HepG2 (cell line): ENCODE measurements at regions of chr7 and their contacts with region 1.

Region 1: GRCh38 chr7:101542527-101543241 is 86.4 kb downstream of the MYL10 start:
- DNase-seq: peak; percentile 53
- ATAC-seq: peak; percentile 57
- H3K4me3 ChIP-seq: no peak overlapping the region
- H3K27ac ChIP-seq: no peak overlapping the region
- H3K4me1 ChIP-seq: peaks cover 18% of the 10 kb centered on the region
- H3K27me3 ChIP-seq: no peaks in the 10 kb centered on the region
- CTCF ChIP-seq: peak; percentile 95
- EP300 ChIP-seq: no peak
- POLR2A ChIP-seq: no peak
- RAD21 ChIP-seq: peak; percentile 85

Region 2: GRCh38 chr7:101031082-101031481 is 511.6 kb before region 1 on chr7:
- CTCF ChIA-PET with region 1: no interaction called
- POLR2A ChIA-PET with region 1: no interaction called
- in situ Hi-C with region 1: no loop called
- intact Hi-C with region 1: no loop called
- DNase-seq: no peak
- ATAC-seq: no peak; the same call in 2 of the 3 replicates
- H3K4me3 ChIP-seq: no peak overlapping the region
- H3K27ac ChIP-seq: no peak overlapping the region
- H3K4me1 ChIP-seq: no peaks in the 10 kb centered on the region
- H3K27me3 ChIP-seq: peaks cover 0 to 7% of the 10 kb centered on the region in 2 experiments; a peak in 1 of 5 replicates
- CTCF ChIP-seq: peak; percentile 56
- EP300 ChIP-seq: no peak
- POLR2A ChIP-seq: no peak
- RAD21 ChIP-seq: no peak

Region 3: DNA sequence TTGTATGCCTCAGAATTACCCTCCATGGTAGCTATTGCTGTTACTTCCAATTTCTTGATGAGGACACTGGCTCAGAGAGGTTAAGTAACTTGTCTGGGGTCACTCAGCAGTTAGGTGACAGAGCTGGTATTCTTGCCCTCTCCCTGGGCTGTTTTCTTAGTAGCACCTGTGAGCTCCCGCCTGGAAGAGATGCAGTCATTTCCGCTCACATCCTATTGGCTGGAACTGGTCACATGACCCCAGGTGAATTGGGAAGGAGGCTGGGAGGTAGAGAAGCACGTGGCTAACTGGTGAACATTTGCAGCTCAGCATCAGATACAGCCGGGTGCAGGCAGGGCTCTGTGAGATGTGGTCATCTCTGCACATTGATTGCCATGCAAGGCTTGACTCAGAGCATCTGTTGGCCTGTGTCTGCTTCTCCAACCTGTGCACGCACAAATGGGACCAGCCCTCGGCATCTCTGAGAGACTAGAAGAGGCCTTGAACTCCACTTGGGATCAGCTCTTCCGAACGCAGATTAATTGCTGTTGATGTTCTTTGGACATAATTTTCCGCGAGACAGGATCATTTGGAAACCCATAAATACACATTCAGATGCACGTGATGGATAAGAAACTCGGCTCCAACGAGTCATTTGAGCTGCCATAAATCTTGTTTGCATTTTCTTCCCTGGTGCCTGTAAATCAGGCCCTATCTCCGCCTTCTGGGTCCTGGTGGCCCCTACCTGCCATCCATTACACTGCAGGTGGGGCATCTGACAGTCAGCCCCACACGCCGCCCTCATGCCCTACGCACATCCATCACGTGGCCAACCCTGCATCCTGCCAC is 43.6 kb after region 1 on chr7:
- CTCF ChIA-PET with region 1: no interaction called
- POLR2A ChIA-PET with region 1: no interaction called
- in situ Hi-C with region 1: no loop called
- intact Hi-C with region 1: loop called (anchors 2 kb)
- DNase-seq: no peak
- ATAC-seq: no peak
- H3K4me3 ChIP-seq: no peak overlapping the region
- H3K27ac ChIP-seq: no peak overlapping the region
- H3K4me1 ChIP-seq: peaks cover 45% of the 10 kb centered on the region
- H3K27me3 ChIP-seq: no peaks in the 10 kb centered on the region
- CTCF ChIP-seq: no peak
- EP300 ChIP-seq: no peak
- POLR2A ChIP-seq: no peak
- RAD21 ChIP-seq: no peak

Region 4: DNA sequence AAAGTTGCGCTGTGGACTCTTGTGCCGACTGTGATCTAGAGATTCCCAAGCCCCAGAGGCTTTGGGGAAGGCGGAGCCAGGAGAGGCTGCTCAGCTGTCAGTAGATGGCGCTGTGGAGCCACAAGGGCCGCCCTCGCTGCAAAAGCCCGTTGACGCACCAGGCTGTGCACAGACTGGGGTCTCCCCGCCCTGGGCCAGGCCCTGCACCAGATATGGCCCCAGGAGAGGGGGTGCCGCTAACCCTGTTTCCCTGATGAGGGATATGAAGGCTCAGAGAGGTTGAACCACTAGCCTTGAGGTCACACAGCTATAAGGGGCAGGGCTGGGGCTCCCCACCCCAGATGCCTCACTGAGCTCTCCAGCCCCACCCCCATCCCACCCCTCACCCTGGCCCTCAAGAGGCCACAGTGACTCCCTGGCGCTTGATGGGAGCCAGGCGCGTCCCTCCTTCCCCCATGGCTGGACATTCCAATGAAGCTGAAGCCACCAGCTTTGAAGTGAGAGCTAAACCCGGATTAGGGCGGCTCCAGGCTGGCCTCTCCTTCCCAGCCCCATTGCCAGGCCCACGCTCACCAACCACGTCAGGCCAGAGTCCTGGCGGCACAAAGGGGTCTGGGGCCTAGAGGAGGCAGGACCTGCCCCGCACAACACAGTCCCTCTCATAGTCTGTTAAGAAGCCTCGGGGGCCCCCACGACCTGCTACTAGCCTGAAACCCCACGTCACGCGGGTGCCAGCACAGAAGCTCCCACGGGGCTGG is 60.0 kb after region 1 on chr7:
- CTCF ChIA-PET with region 1: no interaction called
- POLR2A ChIA-PET with region 1: no interaction called
- in situ Hi-C with region 1: loop called (anchors 5 kb)
- intact Hi-C with region 1: loop called (anchors 2 kb)
- DNase-seq: peak; percentile 72
- ATAC-seq: peak; percentile 86
- H3K4me3 ChIP-seq: peak overlapping the region in 1 of 3 experiments; percentile 55; a peak in 1 of 6 replicates
- H3K27ac ChIP-seq: no peak overlapping the region
- H3K4me1 ChIP-seq: peaks cover 47% of the 10 kb centered on the region
- H3K27me3 ChIP-seq: peaks cover 0 to 21% of the 10 kb centered on the region in 2 experiments; a peak in 3 of 5 replicates
- CTCF ChIP-seq: peak; percentile 94
- EP300 ChIP-seq: no peak
- POLR2A ChIP-seq: no peak
- RAD21 ChIP-seq: peak; percentile 90

Region 5: DNA sequence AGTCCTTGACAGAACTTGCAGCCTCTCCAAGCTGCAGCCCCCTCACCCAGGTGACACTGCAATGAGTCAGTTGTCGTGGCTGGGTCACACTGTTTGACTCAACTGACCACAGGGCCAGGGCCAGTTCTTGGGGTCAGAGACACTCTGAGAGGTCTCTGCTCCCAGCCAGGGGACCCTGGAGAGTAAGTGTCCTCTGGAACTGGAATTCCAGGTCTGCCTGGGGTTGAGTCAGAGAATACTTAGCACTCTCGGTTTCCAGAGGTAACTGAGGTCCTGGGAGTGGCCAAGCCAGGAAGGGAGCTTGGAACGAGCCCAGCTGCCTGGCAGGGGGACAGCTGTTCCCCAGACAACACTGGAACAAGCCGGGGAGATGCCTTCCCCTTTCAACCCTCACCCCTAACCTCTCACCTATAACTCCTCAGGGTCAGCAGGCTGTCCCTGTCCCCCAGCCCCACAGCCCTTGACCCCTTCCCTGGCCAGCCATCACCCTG is 88.6 kb after region 1 on chr7:
- CTCF ChIA-PET with region 1: no interaction called
- POLR2A ChIA-PET with region 1: no interaction called
- in situ Hi-C with region 1: no loop called
- intact Hi-C with region 1: no loop called
- DNase-seq: no peak
- ATAC-seq: no peak; the same call in 2 of the 3 replicates
- H3K4me3 ChIP-seq: no peak overlapping the region
- H3K27ac ChIP-seq: no peak overlapping the region
- H3K4me1 ChIP-seq: peaks cover 12% of the 10 kb centered on the region
- H3K27me3 ChIP-seq: peaks cover 2 to 43% of the 10 kb centered on the region in 2 experiments; a peak in 3 of 5 replicates
- CTCF ChIP-seq: no peak
- EP300 ChIP-seq: no peak
- POLR2A ChIP-seq: no peak
- RAD21 ChIP-seq: no peak

Region 6: GRCh38 chr7:101688183-101688831 is 145.6 kb after region 1 on chr7:
- CTCF ChIA-PET with region 1: no interaction called
- POLR2A ChIA-PET with region 1: no interaction called
- in situ Hi-C with region 1: loop called (anchors 10 kb)
- intact Hi-C with region 1: no loop called
- DNase-seq: peak; percentile 44
- ATAC-seq: peak; percentile 86
- H3K4me3 ChIP-seq: peak overlapping the region in 2 of 3 experiments; percentile 53 to 72; a peak in 3 of 6 replicates
- H3K27ac ChIP-seq: no peak overlapping the region
- H3K4me1 ChIP-seq: peaks cover 40% of the 10 kb centered on the region
- H3K27me3 ChIP-seq: peaks cover 0 to 14% of the 10 kb centered on the region in 2 experiments; a peak in 2 of 5 replicates
- CTCF ChIP-seq: peak; percentile 99
- EP300 ChIP-seq: no peak
- POLR2A ChIP-seq: no peak
- RAD21 ChIP-seq: peak; percentile 95

Region 7: DNA sequence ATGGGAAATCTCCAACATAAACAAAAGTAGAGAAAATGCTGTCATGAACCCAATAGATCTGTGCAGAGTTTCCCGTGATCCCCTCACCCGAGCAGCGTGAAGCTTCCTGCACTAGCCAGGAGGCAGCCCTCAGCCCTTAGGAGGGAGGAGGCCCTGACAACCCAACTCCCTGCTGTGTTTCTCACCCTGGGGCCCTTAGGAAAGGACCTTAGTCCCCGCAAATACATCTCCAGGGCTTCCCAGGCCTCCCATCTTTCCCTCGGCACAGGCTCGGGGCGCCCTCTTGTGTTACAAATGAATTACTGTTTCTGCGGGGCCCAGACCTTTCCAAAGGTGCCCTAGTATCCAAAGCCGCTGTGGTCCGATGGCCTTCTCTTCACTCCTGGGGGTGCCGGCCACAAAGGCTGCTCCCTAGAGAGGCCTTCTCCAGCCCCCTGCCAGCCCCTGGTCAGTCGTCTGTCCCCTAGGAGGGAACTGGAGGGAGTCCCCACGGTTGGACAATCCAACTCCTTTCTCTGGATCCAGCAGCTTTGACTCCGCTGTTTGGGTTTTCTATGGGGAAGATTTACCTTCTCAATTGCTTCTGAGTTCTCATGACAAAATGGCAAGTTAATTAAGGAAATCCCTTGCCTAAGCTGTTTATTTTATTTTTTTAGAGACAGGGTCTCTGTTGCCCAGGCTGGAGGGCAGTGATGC is 694.1 kb after region 1 on chr7:
- CTCF ChIA-PET with region 1: interaction called, 5 read pairs
- POLR2A ChIA-PET with region 1: no interaction called
- in situ Hi-C with region 1: no loop called
- intact Hi-C with region 1: loop called (anchors 10 kb)
- DNase-seq: peak; percentile 46
- ATAC-seq: peak; percentile 95
- H3K4me3 ChIP-seq: no peak overlapping the region
- H3K27ac ChIP-seq: no peak overlapping the region
- H3K4me1 ChIP-seq: peaks cover 7% of the 10 kb centered on the region
- H3K27me3 ChIP-seq: no peaks in the 10 kb centered on the region
- CTCF ChIP-seq: peak; percentile 94
- EP300 ChIP-seq: no peak
- POLR2A ChIP-seq: no peak
- RAD21 ChIP-seq: peak; percentile 94

Region 8: DNA sequence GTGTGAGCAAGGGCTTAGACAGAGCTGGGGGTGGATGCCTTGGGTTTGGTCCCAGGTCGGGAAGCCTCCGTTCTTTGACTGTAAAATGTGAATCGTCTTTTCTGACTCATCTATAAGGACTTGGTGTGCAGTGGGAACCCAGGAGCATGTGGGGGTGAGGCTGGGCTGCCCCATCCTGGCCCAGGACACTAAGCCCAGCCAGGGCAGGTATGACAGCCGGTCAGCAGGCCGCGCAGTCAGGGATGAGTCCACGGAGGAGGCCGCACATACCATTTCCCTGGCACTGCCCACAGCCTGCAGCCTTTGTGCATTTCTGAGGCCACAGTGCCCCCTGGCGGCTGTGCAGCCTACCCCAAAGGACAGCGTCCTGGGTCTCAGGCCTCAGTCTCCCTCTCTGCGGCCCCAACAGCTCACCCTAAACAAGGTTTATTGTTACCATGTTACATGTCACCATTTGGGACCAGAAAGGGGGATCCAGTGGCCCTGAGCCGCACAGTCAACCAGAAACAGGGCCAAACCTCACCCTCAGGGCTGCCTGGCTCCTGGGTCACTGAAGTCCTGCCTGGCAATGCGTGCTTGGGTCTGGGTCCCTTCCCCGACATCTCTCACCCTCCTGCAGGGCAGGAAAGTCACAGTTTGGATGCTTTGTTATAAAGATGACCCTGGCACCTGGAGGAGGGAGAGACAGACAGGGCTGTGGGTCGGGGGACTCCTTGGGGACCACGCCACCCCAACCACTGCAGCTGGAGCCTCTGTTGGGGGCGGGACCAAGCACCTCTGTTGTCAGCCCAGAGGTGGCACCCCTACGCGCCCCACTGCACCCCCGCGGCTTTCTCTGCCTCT is 729.6 kb after region 1 on chr7:
- CTCF ChIA-PET with region 1: interaction called, 8 read pairs
- POLR2A ChIA-PET with region 1: no interaction called
- in situ Hi-C with region 1: loop called (anchors 5 kb)
- intact Hi-C with region 1: no loop called
- DNase-seq: peak; percentile 65
- ATAC-seq: peak; percentile 75
- H3K4me3 ChIP-seq: peak overlapping the region in 1 of 3 experiments; percentile 40; a peak in 1 of 6 replicates
- H3K27ac ChIP-seq: no peak overlapping the region
- H3K4me1 ChIP-seq: peaks cover 45% of the 10 kb centered on the region
- H3K27me3 ChIP-seq: no peaks in the 10 kb centered on the region; a peak in 1 of 5 replicates
- CTCF ChIP-seq: peak; percentile 99
- EP300 ChIP-seq: no peak
- POLR2A ChIP-seq: no peak
- RAD21 ChIP-seq: peak; percentile 98